MCF 10A (cell line): ENCODE measurements at regions of chr17 and their contacts with region 1.

Region 1: DNA sequence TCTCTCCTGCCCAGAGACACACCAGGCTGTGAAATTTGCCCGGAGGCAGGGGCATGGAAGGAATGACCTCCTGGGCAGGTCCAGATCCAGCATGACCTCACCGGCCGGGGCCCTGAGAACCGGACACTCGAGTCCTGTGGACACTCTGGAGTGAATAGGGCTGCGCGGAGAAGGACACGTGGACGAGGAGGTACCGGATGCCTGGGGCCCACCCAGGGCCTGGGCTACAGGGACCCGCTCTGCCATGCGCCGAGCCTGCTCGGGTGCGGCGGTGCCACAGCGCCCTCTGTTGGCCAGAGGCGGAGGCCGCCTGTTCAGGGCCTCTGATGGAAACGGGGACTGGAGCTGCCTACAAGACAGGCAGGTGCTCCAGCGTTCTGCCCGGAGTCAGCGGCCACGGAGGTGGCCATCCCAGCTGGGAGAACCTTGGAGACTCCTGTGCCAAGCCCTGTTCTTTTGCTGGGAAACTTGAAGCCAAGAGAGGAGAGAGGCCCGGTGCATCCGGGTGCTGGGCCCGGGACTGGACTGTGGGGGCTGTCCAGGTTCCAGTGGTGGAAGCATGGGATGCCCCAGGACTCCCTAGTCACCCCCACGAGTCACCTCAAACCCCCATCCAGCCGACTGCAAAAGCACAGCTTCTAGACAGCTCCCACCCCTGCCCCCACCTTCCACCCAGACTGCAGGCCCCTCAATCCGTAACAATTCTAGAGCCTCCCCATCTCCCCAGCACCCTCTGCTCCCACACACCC is 19.3 kb upstream of the NXPH3 start:
- DNase-seq: peak; percentile 63
- H3K4me3 Mint-ChIP-seq: no peak overlapping the region
- H3K27ac Mint-ChIP-seq: no peak overlapping the region
- H3K4me1 Mint-ChIP-seq: peaks cover 20% of the 10 kb centered on the region
- H3K27me3 Mint-ChIP-seq: peaks cover 11% of the 10 kb centered on the region
- CTCF ChIP-seq: peak; percentile 98

Region 2: GRCh38 chr17:49315551-49316257 is 240.7 kb before region 1 on chr17:
- CTCF ChIA-PET with region 1: interaction called, 9 read pairs
- POLR2A ChIA-PET with region 1: no interaction called
- intact Hi-C with region 1: loop called (anchors 1 kb)
- DNase-seq: peak; percentile 89
- H3K4me3 Mint-ChIP-seq: peak overlapping the region; percentile 25
- H3K27ac Mint-ChIP-seq: no peak overlapping the region
- H3K4me1 Mint-ChIP-seq: peaks cover 17% of the 10 kb centered on the region
- H3K27me3 Mint-ChIP-seq: no peaks in the 10 kb centered on the region
- CTCF ChIP-seq: peak; percentile 83

Region 3: GRCh38 chr17:49414622-49415350 is 141.6 kb before region 1 on chr17 and contains the start of gene PHB1:
- CTCF ChIA-PET with region 1: interaction called, 60 read pairs
- POLR2A ChIA-PET with region 1: interaction called, 3 read pairs
- intact Hi-C with region 1: no loop called
- DNase-seq: peak; percentile 98
- H3K4me3 Mint-ChIP-seq: peak within 1 kb of the TSS; percentile 84
- H3K27ac Mint-ChIP-seq: peak within 1 kb of the TSS; percentile 78
- H3K4me1 Mint-ChIP-seq: peaks cover 6% of the 10 kb centered on the region
- H3K27me3 Mint-ChIP-seq: no peaks in the 10 kb centered on the region
- CTCF ChIP-seq: no peak
- total RNA-seq, gene PHB1: 122 and 134 TPM in 2 replicates

Region 4: DNA sequence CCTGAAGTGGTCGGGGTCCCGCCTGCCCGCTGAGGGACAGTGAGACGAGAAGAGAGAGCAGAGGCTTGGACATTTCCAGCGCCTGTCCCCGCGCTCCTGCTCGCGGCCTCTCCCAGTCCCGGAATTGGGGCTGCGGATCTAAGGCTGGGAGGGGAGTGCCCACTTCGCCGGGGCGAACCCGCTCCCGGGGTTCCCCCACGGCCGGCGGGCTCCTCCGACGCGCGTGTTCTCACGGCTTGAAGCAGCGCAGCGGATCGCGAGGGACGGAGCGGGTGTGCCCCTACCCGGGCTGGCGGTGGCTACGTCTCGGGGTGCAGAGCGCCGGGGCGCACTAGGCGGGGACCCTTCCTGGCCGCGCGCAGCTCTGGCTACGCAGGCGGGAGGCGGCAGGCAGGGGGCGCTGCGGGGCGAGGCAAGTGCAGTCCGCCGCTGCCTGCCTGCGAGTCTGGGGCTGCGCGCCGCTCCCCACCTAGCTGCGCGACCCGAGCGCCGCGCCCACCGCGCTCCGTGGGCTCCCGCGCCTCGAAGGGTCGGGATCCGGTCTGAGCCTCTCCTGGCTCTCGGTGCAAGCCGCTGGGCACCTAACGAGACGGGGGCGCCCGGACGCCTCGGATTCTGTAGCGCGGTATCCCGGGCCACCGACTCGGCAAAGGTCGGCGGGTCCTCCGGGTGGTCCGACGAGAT is 60.1 kb before region 1 on chr17:
- CTCF ChIA-PET with region 1: interaction called, 58 read pairs
- POLR2A ChIA-PET with region 1: interaction called, 8 read pairs
- intact Hi-C with region 1: loop called (anchors 2 kb)
- DNase-seq: peak; percentile 53
- H3K4me3 Mint-ChIP-seq: peak overlapping the region; percentile 58
- H3K27ac Mint-ChIP-seq: no peak overlapping the region
- H3K4me1 Mint-ChIP-seq: peaks cover 14% of the 10 kb centered on the region
- H3K27me3 Mint-ChIP-seq: peaks cover 66% of the 10 kb centered on the region
- CTCF ChIP-seq: peak; percentile 86

Region 5: DNA sequence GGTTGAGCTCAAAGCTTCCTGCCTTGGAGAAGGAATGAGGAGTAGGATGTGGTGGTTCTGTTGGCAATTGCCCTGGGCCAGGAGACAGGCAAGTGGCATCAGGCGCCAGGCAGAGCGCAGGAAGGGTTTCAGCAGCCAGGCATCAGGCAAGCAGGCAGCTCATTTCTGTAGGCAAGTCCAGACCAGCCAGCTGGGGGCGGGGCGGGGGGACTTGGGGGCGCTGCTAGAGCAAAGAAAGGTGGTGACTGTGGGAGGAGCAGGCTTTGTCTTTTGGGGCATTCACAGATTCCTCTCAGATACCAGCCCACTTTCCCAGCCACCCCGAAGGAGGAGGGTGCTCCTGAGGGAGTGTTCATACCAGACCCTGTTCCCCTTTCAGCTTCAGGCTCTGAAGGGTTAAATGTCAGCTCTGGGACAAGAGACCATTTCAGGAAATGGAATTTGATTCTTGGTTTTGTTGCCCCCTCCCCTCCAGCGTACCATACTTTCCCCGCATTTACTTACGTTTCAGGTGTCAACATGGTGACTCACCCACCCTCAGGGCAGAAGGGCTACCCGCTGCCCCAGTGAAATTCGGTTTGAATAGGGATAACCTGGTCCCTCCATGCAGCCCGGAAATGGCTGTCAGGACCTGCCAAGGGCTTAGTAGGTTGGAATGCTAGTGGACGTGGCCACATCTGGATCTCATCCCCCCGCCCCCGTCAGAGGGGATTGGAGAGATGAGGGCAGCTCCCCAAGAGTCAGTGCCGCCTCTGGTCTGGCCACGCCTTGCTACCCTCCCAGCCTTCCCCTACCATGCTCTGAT is 48.1 kb before region 1 on chr17:
- CTCF ChIA-PET with region 1: interaction called, 34 read pairs
- POLR2A ChIA-PET with region 1: interaction called, 4 read pairs
- intact Hi-C with region 1: no loop called
- DNase-seq: peak; percentile 98
- H3K4me3 Mint-ChIP-seq: peak overlapping the region; percentile 45
- H3K27ac Mint-ChIP-seq: no peak overlapping the region
- H3K4me1 Mint-ChIP-seq: peaks cover 13% of the 10 kb centered on the region
- H3K27me3 Mint-ChIP-seq: peaks cover 22% of the 10 kb centered on the region
- CTCF ChIP-seq: no peak

Region 6: GRCh38 chr17:49567871-49568694 is 11.7 kb after region 1 on chr17:
- CTCF ChIA-PET with region 1: interaction called, 26 read pairs
- POLR2A ChIA-PET with region 1: interaction called, 4 read pairs
- intact Hi-C with region 1: loop called (anchors 1 kb)
- DNase-seq: peak; percentile 79
- H3K4me3 Mint-ChIP-seq: peak overlapping the region; percentile 56
- H3K27ac Mint-ChIP-seq: no peak overlapping the region
- H3K4me1 Mint-ChIP-seq: peaks cover 20% of the 10 kb centered on the region
- H3K27me3 Mint-ChIP-seq: peaks cover 24% of the 10 kb centered on the region
- CTCF ChIP-seq: peak; percentile 95

Region 7: GRCh38 chr17:49715717-49716279 is 159.4 kb after region 1 on chr17:
- CTCF ChIA-PET with region 1: interaction called, 10 read pairs
- POLR2A ChIA-PET with region 1: no interaction called
- intact Hi-C with region 1: no loop called
- DNase-seq: no peak
- H3K4me3 Mint-ChIP-seq: no peak overlapping the region
- H3K27ac Mint-ChIP-seq: no peak overlapping the region
- H3K4me1 Mint-ChIP-seq: no peaks in the 10 kb centered on the region
- H3K27me3 Mint-ChIP-seq: no peaks in the 10 kb centered on the region
- CTCF ChIP-seq: no peak

Region 8: DNA sequence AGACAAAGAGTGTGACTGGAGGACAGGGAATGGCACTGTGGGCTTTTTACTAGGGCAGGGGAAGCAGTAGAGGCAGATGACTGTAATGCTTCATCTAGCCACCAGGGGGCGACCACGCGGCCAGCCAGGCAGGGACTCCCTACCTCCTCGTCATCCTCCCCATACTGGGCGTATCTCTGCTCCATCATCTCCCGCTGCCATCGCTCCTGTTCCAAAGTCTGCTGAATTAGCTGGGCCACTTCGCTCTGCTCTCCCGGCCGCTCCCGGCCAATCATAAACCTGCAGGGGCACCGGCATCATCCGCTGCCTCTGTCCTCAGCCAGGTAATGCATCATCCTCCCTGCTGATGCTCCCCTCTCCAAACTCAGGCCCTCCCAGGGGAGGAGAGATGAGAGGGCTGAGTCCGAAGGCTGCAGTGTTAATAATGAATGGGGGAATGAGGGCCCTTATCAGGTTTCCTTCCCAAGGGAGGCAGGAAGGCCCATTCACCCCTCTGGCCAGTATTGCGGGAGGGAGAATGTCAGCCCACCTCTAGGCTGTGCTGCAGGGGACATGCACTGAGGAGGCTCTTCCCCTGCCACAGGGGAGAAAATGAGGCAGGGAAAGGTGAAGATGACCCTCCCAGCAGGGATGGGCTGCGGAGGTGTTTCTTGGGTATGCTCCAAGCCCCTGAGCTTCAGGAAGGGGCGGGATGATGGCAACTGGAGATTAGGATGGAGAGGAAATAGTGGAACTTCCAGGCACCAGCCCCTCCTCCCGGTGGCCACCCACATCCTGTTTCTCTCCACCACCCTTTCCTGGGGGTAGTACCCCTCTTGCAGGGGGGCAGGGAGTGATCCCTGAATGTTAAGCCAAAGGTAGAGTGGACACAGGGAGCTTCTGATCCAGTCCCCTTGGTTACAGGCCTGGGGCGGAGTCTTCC is 583.8 kb after region 1 on chr17:
- CTCF ChIA-PET with region 1: no interaction called
- POLR2A ChIA-PET with region 1: no interaction called
- intact Hi-C with region 1: no loop called
- DNase-seq: peak; percentile 73
- H3K4me3 Mint-ChIP-seq: no peak overlapping the region
- H3K27ac Mint-ChIP-seq: no peak overlapping the region
- H3K4me1 Mint-ChIP-seq: peaks cover 13% of the 10 kb centered on the region
- H3K27me3 Mint-ChIP-seq: no peaks in the 10 kb centered on the region
- CTCF ChIP-seq: peak; percentile 91